Transverse colon (tissue), 4 donors: ENCODE measurements at regions of chr17 and their contacts with region 1.

Region 1: GRCh38 chr17:64145757-64146417 is 15.9 kb upstream of the ERN1 start:
- DNase-seq: peak; percentile 97
- H3K4me3 ChIP-seq: peak overlapping the region; percentile 62 to 87 (median 68)
- H3K27ac ChIP-seq: peak overlapping the region; percentile 92 to 96 (median 94)
- H3K4me1 ChIP-seq: peaks cover 8 to 20% (median 17%) of the 10 kb centered on the region in 4 donors
- H3K27me3 ChIP-seq: no peaks in the 10 kb centered on the region
- CTCF ChIP-seq: peak in 3 of 5 experiments; percentile 6 to 34 (median 34)
- EP300 ChIP-seq: no peak
- POLR2A ChIP-seq: peak; percentile 99

Region 2: DNA sequence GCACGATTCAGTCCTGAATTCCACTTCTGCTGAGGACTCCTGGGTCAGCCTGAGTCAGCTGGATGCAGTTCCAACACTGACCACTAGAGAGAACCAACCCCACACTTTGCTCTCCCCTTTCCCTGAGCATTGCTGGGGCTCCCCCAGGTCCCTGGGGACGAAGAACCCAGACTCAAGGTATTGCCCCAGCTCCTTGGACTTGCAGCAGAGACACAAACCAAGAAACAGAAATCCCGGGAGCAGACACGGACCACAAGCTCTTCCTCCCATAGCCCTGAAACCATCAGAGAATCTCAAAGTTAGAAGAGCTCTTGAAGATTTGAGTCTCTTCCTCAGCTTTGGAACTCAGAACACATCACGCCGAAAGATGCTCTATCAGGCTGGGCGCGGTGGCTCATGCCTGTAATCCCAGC is 226.6 kb before region 1 on chr17:
- in situ Hi-C with region 1: loop called in 1 of 4 experiments (anchors 25 kb)
- intact Hi-C with region 1: no loop called
- DNase-seq: peak; percentile 69
- H3K4me3 ChIP-seq: no peak overlapping the region
- H3K27ac ChIP-seq: no peak overlapping the region
- H3K4me1 ChIP-seq: no peaks in the 10 kb centered on the region
- H3K27me3 ChIP-seq: no peaks in the 10 kb centered on the region
- CTCF ChIP-seq: peak; percentile 94 to 98 (median 95)
- EP300 ChIP-seq: no peak
- POLR2A ChIP-seq: no peak

Region 3: GRCh38 chr17:64036198-64036922 is 109.5 kb before region 1 on chr17:
- in situ Hi-C with region 1: loop called in 1 of 4 experiments (anchors 10 kb)
- intact Hi-C with region 1: no loop called
- DNase-seq: no peak
- H3K4me3 ChIP-seq: no peak overlapping the region
- H3K27ac ChIP-seq: no peak overlapping the region
- H3K4me1 ChIP-seq: peaks cover 0 to 2% (median 0%) of the 10 kb centered on the region in 4 donors
- H3K27me3 ChIP-seq: no peaks in the 10 kb centered on the region
- CTCF ChIP-seq: no peak
- EP300 ChIP-seq: no peak
- POLR2A ChIP-seq: no peak

Region 4: GRCh38 chr17:64262417-64263260 is 116.8 kb after region 1 on chr17 and contains the start of gene TEX2:
- in situ Hi-C with region 1: loop called in 1 of 4 experiments (anchors 25 kb)
- intact Hi-C with region 1: loop called (anchors 1 kb)
- DNase-seq: peak; percentile 66
- H3K4me3 ChIP-seq: peak within 1 kb of the TSS; percentile 88 to 99 (median 93)
- H3K27ac ChIP-seq: peak within 1 kb of the TSS; percentile 94 to 97 (median 96)
- H3K4me1 ChIP-seq: peaks cover 17 to 35% (median 29%) of the 10 kb centered on the region in 4 donors
- H3K27me3 ChIP-seq: peaks cover 9% of the 10 kb centered on the region
- CTCF ChIP-seq: no peak
- EP300 ChIP-seq: no peak
- POLR2A ChIP-seq: peak; percentile 65
- total RNA-seq, gene TEX2: 12.3 to 137 (median 30.3) TPM

Region 5: DNA sequence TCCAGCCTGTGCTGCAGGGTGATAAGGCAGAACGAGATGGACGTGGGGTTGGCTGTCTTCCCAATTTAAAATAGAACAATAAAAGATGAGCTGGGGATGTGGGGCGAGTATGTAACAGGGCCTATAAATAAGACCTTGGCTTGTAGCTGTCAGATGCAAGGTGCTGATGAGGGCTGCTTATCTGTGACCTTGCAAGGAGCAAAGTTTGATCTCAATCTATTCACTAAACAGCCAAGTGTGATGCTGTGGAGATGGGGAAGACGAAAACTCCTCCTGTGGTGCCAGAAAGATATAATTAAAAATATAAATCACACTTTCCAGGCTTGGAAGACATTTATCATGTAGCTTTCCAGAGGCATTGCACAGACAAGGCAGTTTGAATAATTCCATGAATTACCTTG is 143.9 kb after region 1 on chr17:
- in situ Hi-C with region 1: loop called in 1 of 4 experiments (anchors 25 kb)
- intact Hi-C with region 1: loop called (anchors 5 kb)
- DNase-seq: no peak
- H3K4me3 ChIP-seq: no peak overlapping the region
- H3K27ac ChIP-seq: no peak overlapping the region
- H3K4me1 ChIP-seq: no peaks in the 10 kb centered on the region
- H3K27me3 ChIP-seq: no peaks in the 10 kb centered on the region
- CTCF ChIP-seq: no peak
- EP300 ChIP-seq: no peak
- POLR2A ChIP-seq: no peak